ENCODE measurements at regions of chr11 and their contacts with region 1.

Region 1: DNA sequence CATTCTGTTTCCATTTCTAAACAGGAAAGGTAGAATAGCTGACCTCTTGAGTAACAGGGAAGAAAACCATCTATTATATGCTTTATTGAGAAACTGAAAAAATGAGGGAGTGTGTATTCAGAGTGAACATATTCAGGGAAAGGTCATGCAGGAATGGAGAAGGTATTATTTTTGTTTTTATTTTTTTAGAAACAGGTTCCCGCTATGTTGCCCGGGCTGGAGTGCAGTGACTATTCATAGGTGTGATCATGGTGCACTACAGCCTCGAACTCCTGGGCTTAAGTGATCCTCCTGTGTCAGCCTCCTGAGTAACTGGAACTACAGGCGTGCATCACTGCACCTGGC is 8.8 kb upstream of the RCE1 start:
- DNase-seq: no peak
- ATAC-seq: peak; percentile 24
- H3K4me3 Mint-ChIP-seq: no peak overlapping the region
- H3K27ac Mint-ChIP-seq: no peak overlapping the region
- H3K4me1 Mint-ChIP-seq: peaks cover 10% of the 10 kb centered on the region
- H3K27me3 Mint-ChIP-seq: no peaks in the 10 kb centered on the region
- CTCF ChIP-seq: no peak

Region 2: DNA sequence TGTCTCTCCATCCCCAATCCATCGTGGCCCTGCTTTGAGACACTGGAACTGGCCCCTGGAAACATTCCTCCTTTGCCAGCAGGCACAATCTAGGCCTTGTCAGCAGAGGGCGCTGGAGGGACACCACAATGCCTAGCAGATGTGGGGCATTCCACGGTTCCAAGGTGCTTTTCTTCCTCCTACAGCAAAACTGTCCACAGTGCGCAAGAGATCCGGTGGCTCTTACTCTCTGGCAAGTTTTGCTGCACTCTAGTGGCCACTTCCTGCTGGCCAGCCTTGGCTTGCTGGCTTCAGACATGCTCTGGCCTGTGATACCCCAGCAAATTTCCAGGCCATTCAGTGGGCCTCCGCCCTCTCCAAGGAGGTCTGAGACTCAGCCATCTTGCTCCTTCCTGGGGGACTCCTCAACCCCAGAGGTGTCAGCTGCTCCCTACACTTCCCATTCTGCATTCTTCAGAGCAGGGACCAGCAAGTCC is 139.7 kb before region 1 on chr11:
- CTCF ChIA-PET with region 1: interaction called, 60 read pairs
- POLR2A ChIA-PET with region 1: no interaction called
- intact Hi-C with region 1: loop called (anchors 1 kb)
- DNase-seq: peak; percentile 91
- ATAC-seq: peak; percentile 97
- H3K4me3 Mint-ChIP-seq: no peak overlapping the region
- H3K27ac Mint-ChIP-seq: no peak overlapping the region
- H3K4me1 Mint-ChIP-seq: no peaks in the 10 kb centered on the region
- H3K27me3 Mint-ChIP-seq: no peaks in the 10 kb centered on the region
- CTCF ChIP-seq: peak; percentile 97

Region 3: GRCh38 chr11:66861774-66862558 is 27.5 kb after region 1 on chr11:
- CTCF ChIA-PET with region 1: no interaction called
- POLR2A ChIA-PET with region 1: no interaction called
- intact Hi-C with region 1: no loop called
- DNase-seq: no peak
- ATAC-seq: no peak
- H3K4me3 Mint-ChIP-seq: no peak overlapping the region
- H3K27ac Mint-ChIP-seq: no peak overlapping the region
- H3K4me1 Mint-ChIP-seq: no peaks in the 10 kb centered on the region
- H3K27me3 Mint-ChIP-seq: no peaks in the 10 kb centered on the region
- CTCF ChIP-seq: no peak

Region 4: GRCh38 chr11:66883016-66883968 is 48.8 kb after region 1 on chr11:
- CTCF ChIA-PET with region 1: interaction called, 10 read pairs
- POLR2A ChIA-PET with region 1: no interaction called
- intact Hi-C with region 1: no loop called
- DNase-seq: peak; percentile 81
- ATAC-seq: peak; percentile 79
- H3K4me3 Mint-ChIP-seq: no peak overlapping the region
- H3K27ac Mint-ChIP-seq: no peak overlapping the region
- H3K4me1 Mint-ChIP-seq: peaks cover 11% of the 10 kb centered on the region
- H3K27me3 Mint-ChIP-seq: no peaks in the 10 kb centered on the region
- CTCF ChIP-seq: peak; percentile 83